ENCODE measurements at regions of chr9 and their contacts with region 1.

Region 1: DNA sequence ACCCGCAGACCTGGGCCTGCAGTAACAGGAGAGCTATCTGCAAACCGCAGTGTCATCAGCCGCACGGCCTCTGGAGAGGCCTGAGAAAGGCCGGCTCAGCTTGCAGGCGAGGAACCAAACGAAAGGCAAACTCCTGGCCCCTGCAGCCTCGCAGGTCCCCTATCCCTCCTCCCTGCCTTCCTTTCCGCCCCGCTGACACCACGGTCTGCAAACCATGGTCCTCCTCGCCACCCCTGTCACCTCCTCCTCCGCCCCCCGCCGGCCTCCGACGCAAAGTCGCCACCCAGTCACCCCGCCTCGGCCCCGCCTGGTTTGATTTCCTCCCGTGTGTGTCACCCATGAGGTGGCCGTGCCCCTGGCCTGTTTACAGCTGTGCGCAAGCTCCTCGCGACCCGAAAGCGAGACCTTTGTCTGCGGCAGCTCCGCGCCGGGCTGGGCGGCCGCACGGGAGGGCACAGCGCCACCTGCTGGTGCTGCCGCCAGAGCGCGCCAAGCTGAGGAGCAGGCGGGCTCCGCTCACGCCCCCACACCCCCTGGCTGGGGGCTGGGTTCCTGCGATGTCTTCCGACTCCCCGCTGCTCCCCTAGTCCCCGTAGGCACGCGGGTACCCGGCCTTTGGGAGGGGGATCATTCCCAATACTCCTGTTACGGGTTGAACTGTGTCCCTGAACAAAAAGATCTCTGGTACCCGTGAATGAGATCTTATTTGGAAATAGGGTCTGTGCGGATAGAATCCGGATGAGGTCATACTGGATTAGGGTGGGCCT is 19.4 kb downstream of the GBGT1 start:
- DNase-seq: peak; percentile 91 to 98 (median 95)
- ATAC-seq: peak; percentile 60
- H3K4me3 ChIP-seq: peak overlapping the region; percentile 41 to 49
- H3K4me3 Mint-ChIP-seq: peak overlapping the region; percentile 83
- H3K27ac ChIP-seq: peak overlapping the region; percentile 68 to 96
- H3K27ac Mint-ChIP-seq: peak overlapping the region; percentile 95
- H3K4me1 ChIP-seq: peaks cover 68% of the 10 kb centered on the region
- H3K4me1 Mint-ChIP-seq: peaks cover 70% of the 10 kb centered on the region
- H3K27me3 ChIP-seq: no peaks in the 10 kb centered on the region
- H3K27me3 Mint-ChIP-seq: no peaks in the 10 kb centered on the region
- CTCF ChIP-seq: peak; percentile 98

Region 2: DNA sequence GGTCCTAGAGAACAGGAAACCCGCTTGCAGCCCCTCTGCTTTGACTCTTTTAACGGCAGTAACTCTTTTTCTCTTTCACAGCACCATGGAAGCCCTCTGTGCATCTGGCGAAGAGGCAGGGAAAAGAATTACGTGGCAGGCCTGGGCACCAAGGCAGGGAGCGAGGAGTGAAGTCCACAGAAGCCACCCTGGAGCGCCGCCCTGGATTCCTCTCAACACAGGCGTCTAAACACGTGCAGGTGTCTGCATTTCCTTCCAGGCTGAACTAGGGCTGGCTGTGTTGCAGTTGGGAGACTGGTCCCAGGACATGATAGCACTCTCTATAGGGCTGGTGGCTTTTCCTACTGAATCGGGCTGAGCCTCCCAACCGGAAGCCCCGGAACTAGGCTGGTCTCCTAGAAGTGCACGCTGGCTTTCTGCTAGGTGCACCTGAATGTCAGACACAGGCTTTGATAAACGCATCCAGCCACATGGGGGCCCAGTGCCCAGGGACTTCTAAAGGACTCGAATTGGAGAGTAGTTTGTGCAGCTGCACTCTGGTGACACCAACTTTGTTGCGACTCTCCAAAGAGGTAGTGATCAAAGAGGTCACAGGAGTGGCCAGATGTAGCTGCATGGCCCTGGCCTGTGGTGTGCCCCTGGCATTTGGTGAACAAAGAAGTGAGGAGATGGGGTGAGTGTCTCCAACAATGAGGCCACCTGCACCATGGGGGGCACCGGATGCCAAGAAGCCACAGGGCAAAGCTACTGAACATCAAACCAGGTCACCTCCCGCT is 320.8 kb before region 1 on chr9:
- CTCF ChIA-PET with region 1: no interaction called
- POLR2A ChIA-PET with region 1: no interaction called
- intact Hi-C with region 1: no loop called
- DNase-seq: peak in 1 of 9 experiments; percentile 23
- ATAC-seq: no peak
- H3K4me3 ChIP-seq: no peak overlapping the region
- H3K4me3 Mint-ChIP-seq: no peak overlapping the region
- H3K27ac ChIP-seq: no peak overlapping the region
- H3K27ac Mint-ChIP-seq: no peak overlapping the region
- H3K4me1 ChIP-seq: peaks cover 7% of the 10 kb centered on the region
- H3K4me1 Mint-ChIP-seq: peaks cover 10% of the 10 kb centered on the region
- H3K27me3 ChIP-seq: no peaks in the 10 kb centered on the region
- H3K27me3 Mint-ChIP-seq: peaks cover 12% of the 10 kb centered on the region
- CTCF ChIP-seq: no peak

Region 3: DNA sequence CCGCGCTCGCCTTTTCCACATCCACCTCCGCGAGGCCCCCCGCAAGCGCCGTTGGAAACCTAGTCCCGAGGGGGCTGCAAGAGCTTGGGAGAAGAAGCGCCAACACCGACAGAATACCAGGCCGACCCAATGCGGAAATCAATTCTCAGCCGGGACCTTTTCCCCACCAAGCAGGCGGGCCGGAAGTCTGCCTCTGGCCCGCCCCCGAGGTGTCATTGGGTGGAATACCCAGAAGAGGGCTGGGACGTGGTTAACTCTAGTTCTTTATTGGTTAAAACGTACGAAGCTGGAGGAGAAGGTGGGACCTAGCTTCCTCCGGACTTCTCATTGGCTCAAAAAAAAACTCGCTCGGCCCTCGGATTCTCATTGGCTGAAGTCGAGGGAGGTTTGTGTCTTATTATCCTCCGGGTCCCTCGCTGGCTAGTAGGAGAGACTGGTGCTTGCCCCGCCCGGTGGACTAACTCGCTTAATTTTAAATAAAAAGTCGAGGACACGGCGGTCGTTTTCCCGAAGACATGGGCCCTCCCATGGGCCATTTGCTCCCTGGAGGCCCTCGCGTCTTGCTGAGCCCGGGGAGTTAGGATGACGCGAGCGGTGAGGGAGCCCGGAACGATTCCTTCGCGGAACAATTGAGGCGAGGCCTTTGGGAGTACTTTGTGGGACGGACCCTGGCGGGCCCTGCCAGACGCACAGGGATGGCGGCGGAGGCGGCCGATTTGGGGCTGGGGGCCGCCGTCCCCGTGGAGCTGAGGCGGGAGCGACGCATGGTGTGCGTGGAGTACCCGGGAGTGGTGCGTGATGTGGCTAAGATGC is 113.8 kb before region 1 on chr9 and contains the start of gene GTF3C5:
- CTCF ChIA-PET with region 1: interaction called, 18 read pairs
- POLR2A ChIA-PET with region 1: interaction called, 16 read pairs
- intact Hi-C with region 1: no loop called
- DNase-seq: peak; percentile 80 to 98 (median 91)
- ATAC-seq: peak; percentile 97
- H3K4me3 ChIP-seq: peak within 1 kb of the TSS; percentile 60 to 96
- H3K4me3 Mint-ChIP-seq: peak within 1 kb of the TSS; percentile 99
- H3K27ac ChIP-seq: peak within 1 kb of the TSS; percentile 75 to 94
- H3K27ac Mint-ChIP-seq: peak within 1 kb of the TSS; percentile 98
- H3K4me1 ChIP-seq: peaks cover 27% of the 10 kb centered on the region
- H3K4me1 Mint-ChIP-seq: peaks cover 54% of the 10 kb centered on the region
- H3K27me3 ChIP-seq: no peaks in the 10 kb centered on the region
- H3K27me3 Mint-ChIP-seq: no peaks in the 10 kb centered on the region
- CTCF ChIP-seq: no peak
- total RNA-seq, gene GTF3C5: 54.1 to 58.7 TPM

Region 4: DNA sequence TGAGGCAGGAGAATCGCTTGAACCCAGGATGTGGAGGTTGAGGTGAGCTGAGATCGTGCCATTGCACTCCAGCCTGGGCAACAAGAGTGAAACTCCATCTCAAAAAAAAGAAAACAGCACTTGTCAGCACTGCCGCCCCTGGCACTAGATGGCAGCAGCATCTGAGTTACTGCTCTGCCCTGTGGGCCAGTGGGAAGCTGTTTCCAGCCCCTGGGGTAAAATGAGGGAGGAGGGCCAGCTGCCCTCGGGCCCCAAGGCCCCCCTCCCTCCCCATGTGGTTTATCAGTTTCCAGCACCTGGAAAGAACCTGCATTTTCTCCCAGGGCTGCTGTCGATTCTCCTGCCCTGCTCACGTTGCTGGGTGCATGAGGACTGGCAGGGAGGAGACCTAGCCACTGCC is 95.8 kb before region 1 on chr9:
- CTCF ChIA-PET with region 1: interaction called, 29 read pairs
- POLR2A ChIA-PET with region 1: no interaction called
- intact Hi-C with region 1: loop called in 1 of 2 experiments (anchors 2 kb)
- DNase-seq: peak in 3 of 9 experiments; percentile 26 to 53 (median 43)
- ATAC-seq: peak; percentile 36
- H3K4me3 ChIP-seq: no peak overlapping the region
- H3K4me3 Mint-ChIP-seq: no peak overlapping the region
- H3K27ac ChIP-seq: no peak overlapping the region
- H3K27ac Mint-ChIP-seq: no peak overlapping the region
- H3K4me1 ChIP-seq: no peaks in the 10 kb centered on the region
- H3K4me1 Mint-ChIP-seq: no peaks in the 10 kb centered on the region
- H3K27me3 ChIP-seq: no peaks in the 10 kb centered on the region
- H3K27me3 Mint-ChIP-seq: no peaks in the 10 kb centered on the region
- CTCF ChIP-seq: no peak

Region 5: GRCh38 chr9:133121198-133121939 is 23.0 kb before region 1 on chr9 and contains the start of gene RALGDS:
- CTCF ChIA-PET with region 1: interaction called, 606 read pairs
- POLR2A ChIA-PET with region 1: interaction called, 22 read pairs
- intact Hi-C with region 1: loop called (anchors 1 kb)
- DNase-seq: peak; percentile 84 to 95 (median 92)
- ATAC-seq: peak; percentile 83
- H3K4me3 ChIP-seq: peak within 1 kb of the TSS; percentile 41 to 53
- H3K4me3 Mint-ChIP-seq: peak within 1 kb of the TSS; percentile 84
- H3K27ac ChIP-seq: peak within 1 kb of the TSS; percentile 66 to 96
- H3K27ac Mint-ChIP-seq: peak within 1 kb of the TSS; percentile 98
- H3K4me1 ChIP-seq: peaks cover 63% of the 10 kb centered on the region
- H3K4me1 Mint-ChIP-seq: peaks cover 70% of the 10 kb centered on the region
- H3K27me3 ChIP-seq: no peaks in the 10 kb centered on the region
- H3K27me3 Mint-ChIP-seq: no peaks in the 10 kb centered on the region
- CTCF ChIP-seq: no peak
- total RNA-seq, gene RALGDS: 177 to 186 TPM

Measured in CD8-positive, alpha-beta T cell (primary cell).